Body of pancreas (tissue), 4 donors: ENCODE measurements at regions of chr17 and their contacts with region 1.

Region 1: GRCh38 chr17:4074831-4075495 is 67.9 kb downstream of the ZZEF1 start:
- DNase-seq: peak in 2 of 4 donors; percentile 32 to 37
- ATAC-seq: peak; percentile 90
- H3K4me3 ChIP-seq: no peak overlapping the region
- H3K27ac ChIP-seq: peak overlapping the region in 3 of 4 donors; percentile 0 to 53 (median 50)
- H3K4me1 ChIP-seq: peaks cover 35% of the 10 kb centered on the region
- H3K27me3 ChIP-seq: no peaks in the 10 kb centered on the region
- CTCF ChIP-seq: peak; percentile 45 to 89 (median 81)
- POLR2A ChIP-seq: no peak

Region 2: GRCh38 chr17:3594051-3594800 is 480.7 kb before region 1 on chr17:
- intact Hi-C with region 1: no loop called
- DNase-seq: no peak
- ATAC-seq: no peak
- H3K4me3 ChIP-seq: no peak overlapping the region
- H3K27ac ChIP-seq: no peak overlapping the region
- H3K4me1 ChIP-seq: no peaks in the 10 kb centered on the region
- H3K27me3 ChIP-seq: no peaks in the 10 kb centered on the region
- CTCF ChIP-seq: no peak
- POLR2A ChIP-seq: no peak

Region 3: GRCh38 chr17:3913531-3914311 is 161.2 kb before region 1 on chr17:
- intact Hi-C with region 1: loop called (anchors 10 kb)
- DNase-seq: peak; percentile 82 to 85 (median 82)
- ATAC-seq: peak; percentile 91
- H3K4me3 ChIP-seq: no peak overlapping the region
- H3K27ac ChIP-seq: no peak overlapping the region
- H3K4me1 ChIP-seq: peaks cover 17% of the 10 kb centered on the region
- H3K27me3 ChIP-seq: no peaks in the 10 kb centered on the region
- CTCF ChIP-seq: peak; percentile 93 to 95 (median 95)
- POLR2A ChIP-seq: no peak

Region 4: GRCh38 chr17:4156750-4157381 is 81.9 kb after region 1 on chr17:
- intact Hi-C with region 1: no loop called
- DNase-seq: no peak
- ATAC-seq: no peak
- H3K4me3 ChIP-seq: no peak overlapping the region
- H3K27ac ChIP-seq: no peak overlapping the region
- H3K4me1 ChIP-seq: no peaks in the 10 kb centered on the region
- H3K27me3 ChIP-seq: no peaks in the 10 kb centered on the region
- CTCF ChIP-seq: no peak
- POLR2A ChIP-seq: no peak